Esophagus muscularis mucosa (tissue), 4 donors: ENCODE measurements at regions of chr9 and their contacts with region 1.

Region 1: GRCh38 chr9:74952281-74953151 is at the start of gene C9orf40:
- DNase-seq: peak; percentile 93
- H3K4me3 ChIP-seq: peak within 1 kb of the TSS; percentile 81 to 95 (median 92)
- H3K27ac ChIP-seq: peak within 1 kb of the TSS; percentile 96 to 99 (median 98)
- H3K4me1 ChIP-seq: peaks cover 3 to 15% (median 14%) of the 10 kb centered on the region in 4 donors
- H3K27me3 ChIP-seq: no peaks in the 10 kb centered on the region
- CTCF ChIP-seq: peak; percentile 67 to 94 (median 76)
- EP300 ChIP-seq: no peak
- POLR2A ChIP-seq: no peak
- total RNA-seq, gene C9orf40: 4.0 to 6.2 (median 5.5) TPM

Region 2: GRCh38 chr9:75088260-75088905 is 135.9 kb after region 1 on chr9 and contains the start of gene OSTF1:
- intact Hi-C with region 1: loop called (anchors 5 kb)
- DNase-seq: peak; percentile 97
- H3K4me3 ChIP-seq: peak within 1 kb of the TSS; percentile 82 to 99 (median 96)
- H3K27ac ChIP-seq: peak within 1 kb of the TSS; percentile 94 to 98 (median 96)
- H3K4me1 ChIP-seq: peaks cover 33 to 56% (median 43%) of the 10 kb centered on the region in 4 donors
- H3K27me3 ChIP-seq: no peaks in the 10 kb centered on the region
- CTCF ChIP-seq: peak in 1 of 3 experiments; percentile 2
- EP300 ChIP-seq: no peak
- POLR2A ChIP-seq: peak; percentile 93
- total RNA-seq, gene OSTF1: 22.9 to 29.3 (median 26.9) TPM